Naive thymus-derived CD4-positive, alpha-beta T cell (primary cell): ENCODE measurements at regions of chr19 and their contacts with region 1.

Region 1: DNA sequence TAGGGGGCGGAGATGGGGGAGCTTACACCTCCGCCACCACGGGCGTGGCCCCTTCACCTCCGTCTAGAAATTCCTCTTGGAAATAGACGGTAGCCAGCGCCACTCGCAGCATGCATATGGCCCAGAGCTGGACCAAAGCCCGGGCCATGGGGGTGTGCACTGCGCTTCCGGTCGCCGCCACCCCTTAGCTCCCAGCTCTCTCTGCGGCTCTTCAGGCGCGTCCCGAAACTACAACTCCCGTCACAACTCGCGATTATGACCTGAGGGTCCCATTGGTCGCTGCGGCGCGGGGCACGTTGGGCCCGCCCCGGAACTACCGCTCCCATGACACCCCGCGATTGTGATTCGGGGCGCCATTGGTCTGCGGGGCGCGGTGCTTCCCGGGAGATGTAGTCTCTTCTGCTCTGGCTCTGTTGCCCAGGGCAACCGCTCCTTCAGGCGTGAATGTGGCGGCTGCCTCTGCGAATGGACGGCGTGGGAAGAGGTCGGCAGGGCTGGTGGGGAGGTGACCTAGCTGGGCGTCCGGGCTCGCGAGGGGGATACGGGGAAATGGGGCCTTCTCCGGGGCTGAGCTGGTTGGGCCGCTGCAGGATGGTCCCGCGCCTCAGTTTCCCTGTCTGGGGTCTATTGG is at the starts of genes C19orf44 and CALR3:
- DNase-seq: peak; percentile 84 to 97 (median 96)
- ATAC-seq: peak; percentile 99
- H3K4me3 ChIP-seq: peak within 1 kb of the TSS; percentile 90
- H3K4me3 Mint-ChIP-seq: peak within 1 kb of the TSS; percentile 86 to 98 (median 94)
- H3K27ac ChIP-seq: peak within 1 kb of the TSS; percentile 72
- H3K27ac Mint-ChIP-seq: peak within 1 kb of the TSS; percentile 74 to 98 (median 87)
- H3K4me1 ChIP-seq: peaks cover 0 to 4% of the 10 kb centered on the region in 2 donors
- H3K4me1 Mint-ChIP-seq: peaks cover 10 to 23% (median 19%) of the 10 kb centered on the region in 7 donors
- H3K27me3 ChIP-seq: no peaks in the 10 kb centered on the region
- H3K27me3 Mint-ChIP-seq: no peaks in the 10 kb centered on the region
- total RNA-seq, gene C19orf44: 1.5 to 6.0 (median 3.4) TPM
- total RNA-seq, gene CALR3: not detected

Region 2: GRCh38 chr19:16141043-16141442 is 355.1 kb before region 1 on chr19:
- CTCF ChIA-PET with region 1: no interaction called
- POLR2A ChIA-PET with region 1: no interaction called
- intact Hi-C with region 1: no loop called
- DNase-seq: no peak
- ATAC-seq: peak; percentile 24
- H3K4me3 ChIP-seq: no peak overlapping the region
- H3K4me3 Mint-ChIP-seq: peak overlapping the region in 3 of 10 donors; percentile 21 to 56 (median 30)
- H3K27ac ChIP-seq: no peak overlapping the region
- H3K27ac Mint-ChIP-seq: peak overlapping the region in 3 of 9 donors; percentile 46 to 80 (median 57)
- H3K4me1 ChIP-seq: peaks cover 12 to 30% of the 10 kb centered on the region in 2 donors
- H3K4me1 Mint-ChIP-seq: peaks cover 19 to 51% (median 26%) of the 10 kb centered on the region in 7 donors
- H3K27me3 ChIP-seq: no peaks in the 10 kb centered on the region
- H3K27me3 Mint-ChIP-seq: no peaks in the 10 kb centered on the region

Region 3: DNA sequence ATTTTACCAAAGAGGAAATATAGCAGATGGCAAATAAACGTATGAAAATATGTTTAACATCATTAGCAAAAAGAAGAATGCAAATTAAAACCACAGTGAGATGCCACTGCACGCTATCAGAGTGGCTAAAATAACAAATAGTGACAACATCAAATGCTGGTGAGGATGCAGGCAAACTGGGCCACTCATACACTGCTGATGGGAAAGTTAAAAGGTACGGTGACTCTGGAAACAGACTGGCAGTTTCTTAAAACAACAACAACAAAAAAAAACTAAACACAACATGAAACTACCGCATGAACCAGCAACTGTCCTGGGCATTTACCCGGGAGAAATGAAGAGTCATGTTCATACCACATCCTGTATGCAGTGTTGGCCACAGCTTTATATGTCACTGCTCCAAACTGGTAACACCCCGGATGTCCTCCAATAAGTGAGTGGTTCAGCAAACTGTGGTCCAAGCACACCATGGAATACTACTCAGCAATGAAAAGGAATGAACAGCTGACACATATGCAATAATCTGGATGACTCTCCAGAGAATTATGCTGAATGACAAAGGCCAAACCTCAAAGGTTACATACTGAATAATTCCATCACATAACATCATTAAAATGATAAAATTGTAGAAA is 46.7 kb before region 1 on chr19:
- CTCF ChIA-PET with region 1: no interaction called
- POLR2A ChIA-PET with region 1: no interaction called
- intact Hi-C with region 1: loop called in 1 of 2 experiments (anchors 2 kb)
- DNase-seq: peak in 1 of 9 donors; percentile 9
- ATAC-seq: peak; percentile 88
- H3K4me3 ChIP-seq: no peak overlapping the region
- H3K4me3 Mint-ChIP-seq: peak overlapping the region in 6 of 10 donors; percentile 0 to 40 (median 25)
- H3K27ac ChIP-seq: no peak overlapping the region
- H3K27ac Mint-ChIP-seq: peak overlapping the region in 7 of 9 donors; percentile 23 to 81 (median 66)
- H3K4me1 ChIP-seq: peaks cover 8 to 30% of the 10 kb centered on the region in 2 donors
- H3K4me1 Mint-ChIP-seq: peaks cover 35 to 68% (median 62%) of the 10 kb centered on the region in 7 donors
- H3K27me3 ChIP-seq: no peaks in the 10 kb centered on the region
- H3K27me3 Mint-ChIP-seq: no peaks in the 10 kb centered on the region

Region 4: GRCh38 chr19:16566161-16566560 is 70.1 kb after region 1 on chr19:
- CTCF ChIA-PET with region 1: interaction called, 5 read pairs
- POLR2A ChIA-PET with region 1: interaction called, 3 read pairs
- intact Hi-C with region 1: loop called in 1 of 2 experiments (anchors 1 kb)
- DNase-seq: peak in 8 of 9 donors; percentile 46 to 95 (median 92)
- ATAC-seq: peak; percentile 100
- H3K4me3 ChIP-seq: peak overlapping the region; percentile 17
- H3K4me3 Mint-ChIP-seq: peak overlapping the region; percentile 76 to 97 (median 82)
- H3K27ac ChIP-seq: peak overlapping the region; percentile 81
- H3K27ac Mint-ChIP-seq: peak overlapping the region; percentile 92 to 100 (median 98)
- H3K4me1 ChIP-seq: peaks cover 22 to 24% of the 10 kb centered on the region in 2 donors
- H3K4me1 Mint-ChIP-seq: peaks cover 14 to 63% (median 30%) of the 10 kb centered on the region in 7 donors
- H3K27me3 ChIP-seq: no peaks in the 10 kb centered on the region
- H3K27me3 Mint-ChIP-seq: no peaks in the 10 kb centered on the region

Region 5: GRCh38 chr19:16659831-16660708 is 164.0 kb after region 1 on chr19 and contains the start of gene SMIM7:
- CTCF ChIA-PET with region 1: no interaction called
- POLR2A ChIA-PET with region 1: interaction called, 3 read pairs
- intact Hi-C with region 1: loop called (anchors 1 kb)
- DNase-seq: peak; percentile 95 to 100 (median 99)
- ATAC-seq: peak; percentile 98
- H3K4me3 ChIP-seq: peak within 1 kb of the TSS; percentile 74
- H3K4me3 Mint-ChIP-seq: peak within 1 kb of the TSS; percentile 88 to 100 (median 98)
- H3K27ac ChIP-seq: peak within 1 kb of the TSS; percentile 91
- H3K27ac Mint-ChIP-seq: peak within 1 kb of the TSS; percentile 96 to 99 (median 98)
- H3K4me1 ChIP-seq: peaks cover 19 to 30% of the 10 kb centered on the region in 2 donors
- H3K4me1 Mint-ChIP-seq: peaks cover 22 to 55% (median 41%) of the 10 kb centered on the region in 7 donors
- H3K27me3 ChIP-seq: no peaks in the 10 kb centered on the region
- H3K27me3 Mint-ChIP-seq: peaks cover 0 to 24% (median 0%) of the 10 kb centered on the region in 5 donors
- total RNA-seq, gene SMIM7: 56.9 to 108 (median 78.5) TPM

Region 6: GRCh38 chr19:17020385-17020784 is 524.3 kb after region 1 on chr19:
- CTCF ChIA-PET with region 1: no interaction called
- POLR2A ChIA-PET with region 1: no interaction called
- intact Hi-C with region 1: no loop called
- DNase-seq: no peak
- ATAC-seq: no peak
- H3K4me3 ChIP-seq: no peak overlapping the region
- H3K4me3 Mint-ChIP-seq: no peak overlapping the region
- H3K27ac ChIP-seq: no peak overlapping the region
- H3K27ac Mint-ChIP-seq: no peak overlapping the region
- H3K4me1 ChIP-seq: peaks cover 0 to under 1% of the 10 kb centered on the region in 2 donors
- H3K4me1 Mint-ChIP-seq: peaks cover 0 to 4% (median 0%) of the 10 kb centered on the region in 7 donors
- H3K27me3 ChIP-seq: peaks cover 0 to under 1% of the 10 kb centered on the region in 2 donors
- H3K27me3 Mint-ChIP-seq: peaks cover 13 to 28% (median 24%) of the 10 kb centered on the region in 5 donors

Region 7: DNA sequence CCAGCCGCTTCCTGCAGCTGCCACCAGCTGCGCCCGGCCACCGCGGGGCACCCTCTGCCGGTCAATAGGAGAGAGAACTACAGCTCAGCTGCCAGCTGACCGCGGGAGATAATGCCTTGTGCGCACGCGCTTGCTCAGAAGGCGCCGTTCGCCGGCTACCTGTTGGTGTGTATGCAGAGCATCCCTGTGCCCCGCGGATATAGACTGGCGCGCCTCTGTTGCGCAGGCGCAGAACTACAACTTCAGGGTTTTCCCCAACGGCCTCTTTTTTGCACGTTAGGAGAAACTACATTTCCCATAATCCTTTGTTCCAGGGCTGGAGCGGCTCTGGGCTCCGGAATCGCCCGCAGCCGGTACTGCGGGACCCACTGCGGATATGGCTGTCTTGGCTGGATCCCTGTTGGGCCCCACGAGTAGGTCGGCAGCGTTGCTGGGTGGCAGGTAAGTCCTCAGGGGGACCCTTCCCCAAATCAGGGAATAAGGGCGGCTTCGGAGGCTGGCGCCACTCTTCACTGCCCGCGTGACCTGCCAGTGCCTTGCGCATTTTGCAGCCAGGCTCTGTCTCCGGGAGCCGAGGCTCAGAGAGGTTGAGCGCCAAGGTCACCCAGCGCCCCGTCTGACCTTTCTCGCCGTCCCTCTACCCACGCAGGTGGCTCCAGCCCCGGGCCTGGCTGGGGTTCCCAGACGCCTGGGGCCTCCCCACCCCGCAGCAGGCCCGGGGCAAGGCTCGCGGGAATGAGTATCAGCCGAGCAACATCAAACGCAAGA is 809.6 kb after region 1 on chr19 and contains the start of gene MRPL34:
- CTCF ChIA-PET with region 1: no interaction called
- POLR2A ChIA-PET with region 1: no interaction called
- intact Hi-C with region 1: loop called (anchors 5 to 10 kb)
- DNase-seq: peak; percentile 81 to 96 (median 93)
- ATAC-seq: peak; percentile 65
- H3K4me3 ChIP-seq: peak within 1 kb of the TSS; percentile 93
- H3K4me3 Mint-ChIP-seq: peak within 1 kb of the TSS; percentile 82 to 94 (median 90)
- H3K27ac ChIP-seq: peak within 1 kb of the TSS; percentile 81
- H3K27ac Mint-ChIP-seq: peak within 1 kb of the TSS; percentile 82 to 93 (median 90)
- H3K4me1 ChIP-seq: peaks cover 22 to 32% of the 10 kb centered on the region in 2 donors
- H3K4me1 Mint-ChIP-seq: peaks cover 28 to 64% (median 57%) of the 10 kb centered on the region in 7 donors
- H3K27me3 ChIP-seq: no peaks in the 10 kb centered on the region
- H3K27me3 Mint-ChIP-seq: no peaks in the 10 kb centered on the region
- total RNA-seq, gene MRPL34: 37.0 to 76.0 (median 73.3) TPM